Activated CD4-positive, alpha-beta T cell treated with anti-CD3 and anti-CD28 coated beads for 36 hours (primary cell): ENCODE measurements at regions of chr2 and their contacts with region 1.

Region 1: GRCh38 chr2:152421521-152422370 is 86.8 kb downstream of the FMNL2 start:
- DNase-seq: peak; percentile 27
- ATAC-seq: peak; percentile 82
- H3K4me3 Mint-ChIP-seq: no peak overlapping the region
- H3K27ac Mint-ChIP-seq: no peak overlapping the region
- H3K4me1 Mint-ChIP-seq: peaks cover 12% of the 10 kb centered on the region
- H3K27me3 Mint-ChIP-seq: peaks cover 13% of the 10 kb centered on the region

Region 2: DNA sequence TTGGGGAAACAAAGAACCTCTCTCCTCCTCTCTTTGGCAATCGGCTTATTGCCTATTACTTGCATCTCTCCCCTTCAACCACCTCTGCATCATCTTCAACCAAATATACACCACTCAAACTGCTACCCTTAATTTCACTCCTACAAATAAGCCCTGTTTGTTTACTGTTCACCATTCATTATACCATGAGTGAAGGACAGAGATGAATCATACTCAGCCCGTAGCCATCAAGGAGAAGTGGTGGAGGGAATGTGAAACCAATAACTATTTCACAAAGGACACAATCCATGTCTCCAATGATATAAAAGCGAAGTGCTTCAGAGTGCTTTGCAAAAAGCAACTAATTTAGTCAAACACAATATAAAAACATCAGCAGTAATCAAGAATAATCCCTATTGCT is 399.7 kb before region 1 on chr2:
- CTCF ChIA-PET with region 1: no interaction called
- POLR2A ChIA-PET with region 1: no interaction called
- intact Hi-C with region 1: no loop called
- DNase-seq: no peak
- ATAC-seq: no peak
- H3K4me3 Mint-ChIP-seq: no peak overlapping the region
- H3K27ac Mint-ChIP-seq: no peak overlapping the region
- H3K4me1 Mint-ChIP-seq: peaks cover 5% of the 10 kb centered on the region
- H3K27me3 Mint-ChIP-seq: peaks cover 6% of the 10 kb centered on the region

Region 3: GRCh38 chr2:152445791-152446201 is 24.1 kb after region 1 on chr2:
- CTCF ChIA-PET with region 1: no interaction called
- POLR2A ChIA-PET with region 1: no interaction called
- intact Hi-C with region 1: loop called in 1 of 2 experiments (anchors 2 kb)
- DNase-seq: peak; percentile 18
- ATAC-seq: peak; percentile 83
- H3K4me3 Mint-ChIP-seq: no peak overlapping the region
- H3K27ac Mint-ChIP-seq: no peak overlapping the region
- H3K4me1 Mint-ChIP-seq: peaks cover 11% of the 10 kb centered on the region
- H3K27me3 Mint-ChIP-seq: peaks cover 17% of the 10 kb centered on the region

Region 4: GRCh38 chr2:152499896-152500735 is 78.4 kb after region 1 on chr2:
- CTCF ChIA-PET with region 1: no interaction called
- POLR2A ChIA-PET with region 1: no interaction called
- intact Hi-C with region 1: no loop called
- DNase-seq: no peak
- ATAC-seq: no peak
- H3K4me3 Mint-ChIP-seq: no peak overlapping the region
- H3K27ac Mint-ChIP-seq: no peak overlapping the region
- H3K4me1 Mint-ChIP-seq: peaks cover 2% of the 10 kb centered on the region
- H3K27me3 Mint-ChIP-seq: peaks cover 20% of the 10 kb centered on the region